GM18951 (cell line): ENCODE measurements at regions of chr12 and their contacts with region 1.

Region 1: GRCh38 chr12:31238764-31239387 is 87.1 kb downstream of the SINHCAF start:
- POLR2A ChIP-seq: no peak

Region 2: GRCh38 chr12:30822385-30823155 is 416.3 kb before region 1 on chr12:
- in situ Hi-C with region 1: no loop called
- POLR2A ChIP-seq: no peak

Region 3: DNA sequence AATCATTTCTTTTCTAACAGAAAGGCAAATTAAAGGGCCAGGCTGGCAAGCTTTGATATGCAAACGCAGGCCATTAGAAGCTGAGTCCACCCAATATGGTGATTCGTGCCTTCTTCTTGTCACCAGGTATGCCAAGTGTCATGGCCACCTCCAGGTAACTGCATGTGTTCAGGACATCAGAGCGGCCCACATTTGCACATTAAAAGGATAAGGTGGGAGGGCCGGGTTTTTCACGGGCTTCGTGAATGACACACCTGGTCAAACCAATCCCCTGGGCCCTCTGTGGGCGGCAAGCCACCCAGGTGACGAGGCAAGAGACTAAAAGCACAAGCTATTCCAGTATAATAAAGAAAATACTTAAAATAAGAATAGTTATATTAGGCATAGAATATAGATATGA is 388.2 kb before region 1 on chr12:
- in situ Hi-C with region 1: loop called (anchors 10 kb)
- POLR2A ChIP-seq: no peak

Region 4: DNA sequence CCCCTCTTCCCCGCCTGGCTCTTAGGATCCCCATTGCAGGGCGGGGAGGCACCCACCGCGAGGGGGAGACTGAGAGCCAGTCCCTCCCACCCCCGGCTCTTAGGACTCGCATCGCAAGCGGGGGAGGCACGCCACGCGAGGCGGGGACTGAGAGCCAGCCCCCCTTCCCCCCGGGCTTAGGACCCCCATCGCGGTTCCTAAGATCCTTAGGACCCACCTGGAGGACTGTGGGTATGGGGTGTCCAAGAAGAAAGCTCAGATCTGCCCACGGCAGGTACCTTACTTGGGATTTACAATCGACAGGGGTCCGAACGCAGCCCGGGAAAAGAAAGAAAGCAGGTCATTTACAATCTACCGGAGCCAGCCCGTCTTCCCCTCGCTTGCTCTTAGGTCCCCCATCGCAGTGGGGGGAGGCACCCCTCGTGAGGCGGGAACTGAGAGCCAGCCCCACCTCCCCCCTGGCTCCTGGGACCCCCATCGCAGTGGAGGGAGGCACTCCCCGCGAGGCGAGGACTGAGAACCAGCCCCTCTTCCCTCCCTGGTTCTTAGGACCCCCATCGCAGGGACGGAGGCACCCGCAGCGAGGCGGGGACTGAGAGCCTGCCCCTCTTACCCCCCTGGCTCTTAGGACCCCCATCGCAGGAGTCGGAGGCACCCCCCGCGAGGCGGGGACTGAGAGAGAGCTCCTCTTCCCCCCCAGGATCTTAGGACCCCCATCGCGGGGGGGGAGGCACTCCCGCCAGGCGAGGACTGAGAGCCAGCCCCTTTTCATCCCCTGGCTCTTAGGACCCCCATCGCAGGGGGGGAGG is 121.5 kb before region 1 on chr12:
- in situ Hi-C with region 1: loop called (anchors 25 kb)
- POLR2A ChIP-seq: no peak

Region 5: GRCh38 chr12:32548691-32549281 is 1309.9 kb after region 1 on chr12:
- in situ Hi-C with region 1: no loop called
- POLR2A ChIP-seq: no peak